ENCODE measurements at regions of chr12 and their contacts with region 1.

Region 1: DNA sequence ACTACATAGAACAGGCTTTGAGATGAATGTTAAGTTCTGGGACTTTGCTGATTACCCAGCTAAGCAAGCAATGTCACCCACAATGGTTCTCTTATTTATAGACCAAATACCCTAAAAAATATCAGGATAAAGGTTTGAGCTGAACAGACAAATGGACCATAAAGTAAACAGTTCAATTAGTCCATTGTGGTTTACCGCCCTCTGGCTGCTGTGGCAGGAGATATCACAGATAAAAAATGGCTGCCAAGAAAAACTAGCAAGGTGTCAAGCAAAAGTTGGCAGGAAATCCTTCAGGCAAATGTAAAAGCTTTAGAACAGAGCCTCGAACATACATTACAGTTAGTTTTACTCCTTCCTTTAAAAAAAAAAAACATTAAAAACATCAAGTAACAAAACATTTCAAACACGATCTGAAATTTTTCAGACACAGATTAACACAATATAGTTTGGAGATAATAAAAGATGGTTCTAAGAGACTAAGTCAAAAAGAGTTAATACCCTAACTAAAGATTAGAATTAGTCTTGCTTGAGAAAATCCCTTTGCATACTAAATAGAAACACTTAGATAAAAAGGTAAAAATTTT is 41.3 kb downstream of the MED13L start:
- DNase-seq: peak; percentile 62
- H3K4me3 Mint-ChIP-seq: no peak overlapping the region
- H3K27ac Mint-ChIP-seq: peak overlapping the region; percentile 68
- H3K4me1 Mint-ChIP-seq: peaks cover 21% of the 10 kb centered on the region
- H3K27me3 Mint-ChIP-seq: no peaks in the 10 kb centered on the region

Region 2: DNA sequence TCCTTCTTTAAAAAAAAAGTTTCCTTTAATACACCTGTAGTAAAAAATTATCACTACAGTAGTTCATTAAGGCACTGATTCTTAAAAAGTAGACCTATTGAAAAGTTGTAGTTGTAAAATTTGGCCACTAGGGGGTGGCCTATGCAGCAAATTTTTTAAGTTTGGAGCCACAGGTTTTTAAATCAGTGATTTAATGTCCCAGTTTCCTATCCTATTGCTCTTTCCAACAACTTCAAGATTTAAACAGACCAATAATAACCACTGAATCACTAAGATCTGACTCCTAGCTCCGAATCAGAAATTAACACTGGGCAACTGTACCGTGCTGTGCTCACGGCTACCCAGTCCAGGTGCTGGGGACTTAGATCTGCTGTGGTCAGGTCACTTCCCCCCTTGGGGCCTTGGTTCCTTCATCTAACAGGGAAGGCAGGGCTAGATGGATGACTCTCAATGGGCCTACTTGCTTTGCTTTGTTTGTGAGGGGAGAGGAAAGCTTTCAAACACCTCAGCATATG is 238.1 kb before region 1 on chr12:
- CTCF ChIA-PET with region 1: interaction called, 10 read pairs
- DNase-seq: no peak
- H3K4me3 Mint-ChIP-seq: no peak overlapping the region
- H3K27ac Mint-ChIP-seq: no peak overlapping the region
- H3K4me1 Mint-ChIP-seq: no peaks in the 10 kb centered on the region
- H3K27me3 Mint-ChIP-seq: no peaks in the 10 kb centered on the region

Region 3: DNA sequence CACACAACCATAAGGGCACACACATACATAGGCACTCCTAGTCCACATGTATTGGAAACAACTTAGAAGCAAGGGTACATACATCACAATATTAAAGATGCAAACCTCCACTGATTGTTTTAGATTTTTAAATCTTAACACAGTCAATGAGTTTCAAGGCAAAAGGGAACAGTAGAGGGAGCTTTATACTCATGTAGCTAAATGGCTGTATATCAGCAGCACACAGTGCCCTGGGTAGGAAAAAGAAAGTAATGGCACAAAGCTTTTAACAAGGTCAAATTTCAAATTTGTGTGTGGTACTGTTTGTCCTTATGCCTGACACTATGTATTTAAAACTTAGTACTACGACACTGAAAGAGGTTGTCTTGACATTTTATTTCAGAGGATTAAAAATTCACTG is 220.7 kb before region 1 on chr12:
- CTCF ChIA-PET with region 1: interaction called, 11 read pairs
- DNase-seq: no peak
- H3K4me3 Mint-ChIP-seq: no peak overlapping the region
- H3K27ac Mint-ChIP-seq: no peak overlapping the region
- H3K4me1 Mint-ChIP-seq: no peaks in the 10 kb centered on the region
- H3K27me3 Mint-ChIP-seq: no peaks in the 10 kb centered on the region

Region 4: GRCh38 chr12:116142936-116143898 is 93.0 kb before region 1 on chr12:
- CTCF ChIA-PET with region 1: interaction called, 28 read pairs
- DNase-seq: no peak
- H3K4me3 Mint-ChIP-seq: no peak overlapping the region
- H3K27ac Mint-ChIP-seq: peak overlapping the region; percentile 52
- H3K4me1 Mint-ChIP-seq: peaks cover 42% of the 10 kb centered on the region
- H3K27me3 Mint-ChIP-seq: no peaks in the 10 kb centered on the region